ENCODE measurements at regions of chr17 and their contacts with region 1.

Region 1: DNA sequence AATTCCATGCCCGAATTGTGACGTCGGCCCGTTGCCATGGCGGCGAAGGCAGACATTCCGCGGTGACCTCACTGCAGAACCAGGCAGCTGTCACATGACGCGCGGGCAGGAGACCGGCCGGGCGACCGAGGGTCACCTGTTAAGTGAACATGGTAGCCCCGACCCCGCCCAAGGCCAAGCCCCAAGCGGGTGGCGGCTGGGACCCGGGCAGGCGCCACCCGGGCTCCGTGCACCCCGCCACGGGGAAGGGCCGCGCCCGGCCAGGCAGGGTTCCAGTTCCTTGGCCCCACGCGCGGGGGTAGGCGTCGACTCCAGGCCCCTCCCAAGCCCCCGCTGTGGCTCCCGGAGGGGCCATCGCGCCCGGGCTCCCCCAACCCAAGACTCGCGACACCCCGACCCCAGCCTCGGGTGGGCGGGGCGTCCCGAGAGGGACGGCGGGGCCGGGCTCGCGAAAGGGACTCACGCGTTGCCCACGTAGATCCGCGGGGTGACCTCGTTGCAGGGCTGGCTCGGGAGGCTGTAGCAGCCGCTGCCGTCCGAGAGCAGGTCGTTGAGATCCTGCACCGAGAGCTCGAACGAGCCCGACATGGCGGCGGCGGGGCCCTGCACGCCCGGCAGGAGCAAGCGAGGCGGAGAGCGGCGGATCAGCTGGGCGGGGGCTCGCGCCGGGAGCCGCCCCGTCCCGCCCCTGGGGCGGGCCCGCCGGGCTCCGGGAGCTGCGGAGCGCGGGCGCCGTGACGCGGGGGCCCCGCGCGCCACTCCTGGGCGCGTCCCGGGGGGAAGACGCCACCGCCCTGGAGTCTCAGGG is at the start of gene DUSP3:
- DNase-seq: peak; percentile 79
- ATAC-seq: peak; percentile 94
- H3K4me3 Mint-ChIP-seq: peak within 1 kb of the TSS; percentile 90
- H3K27ac Mint-ChIP-seq: peak within 1 kb of the TSS; percentile 70
- H3K4me1 Mint-ChIP-seq: peaks cover 28% of the 10 kb centered on the region
- H3K27me3 Mint-ChIP-seq: peaks cover 18% of the 10 kb centered on the region
- CTCF ChIP-seq: no peak
- total RNA-seq, gene DUSP3: 16.4 and 16.6 TPM in 2 replicates

Region 2: GRCh38 chr17:43832976-43833829 is 54.7 kb after region 1 on chr17 and contains the start of gene MPP3:
- CTCF ChIA-PET with region 1: no interaction called
- POLR2A ChIA-PET with region 1: no interaction called
- intact Hi-C with region 1: loop called (anchors 5 kb)
- DNase-seq: peak; percentile 31
- ATAC-seq: peak; percentile 80
- H3K4me3 Mint-ChIP-seq: peak within 1 kb of the TSS; percentile 81
- H3K27ac Mint-ChIP-seq: no peak within 1 kb of the TSS
- H3K4me1 Mint-ChIP-seq: peaks cover 10% of the 10 kb centered on the region
- H3K27me3 Mint-ChIP-seq: peaks cover 58% of the 10 kb centered on the region
- CTCF ChIP-seq: no peak
- total RNA-seq, gene MPP3: not detected in 2 replicates

Region 3: GRCh38 chr17:43846221-43846712 is 67.7 kb after region 1 on chr17:
- CTCF ChIA-PET with region 1: interaction called, 4 read pairs
- POLR2A ChIA-PET with region 1: no interaction called
- intact Hi-C with region 1: loop called (anchors 1 kb)
- DNase-seq: peak; percentile 72
- ATAC-seq: peak; percentile 100
- H3K4me3 Mint-ChIP-seq: no peak overlapping the region
- H3K27ac Mint-ChIP-seq: no peak overlapping the region
- H3K4me1 Mint-ChIP-seq: no peaks in the 10 kb centered on the region
- H3K27me3 Mint-ChIP-seq: peaks cover 22% of the 10 kb centered on the region
- CTCF ChIP-seq: peak; percentile 79

Measured in activated B cell treated with CpG ODN at 0.5 μM for 24 hours (primary cell).